Pancreas (tissue), 10 donors: ENCODE measurements at regions of chr3 and their contacts with region 1.

Region 1: DNA sequence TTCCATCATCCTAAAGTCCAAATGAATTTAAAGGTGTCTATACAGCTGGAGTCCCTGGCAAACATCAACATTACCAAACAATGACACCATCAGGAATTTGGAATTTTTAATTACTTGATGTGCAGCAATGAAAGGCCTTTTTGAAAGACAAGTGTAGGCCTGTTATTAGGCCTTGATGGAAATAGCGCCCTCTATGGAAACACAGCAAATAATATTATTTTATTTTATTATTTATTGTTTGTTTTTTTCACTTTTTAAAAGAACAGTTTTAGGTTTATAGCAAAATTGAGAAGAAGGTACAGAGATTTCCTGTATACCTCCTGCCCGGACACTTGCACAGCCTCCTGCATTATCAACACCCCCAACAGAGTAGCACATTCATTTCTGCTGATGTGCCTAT is 18.1 kb upstream of the OR5AC2 start:
- DNase-seq: no peak
- ATAC-seq: no peak
- H3K4me3 ChIP-seq: no peak overlapping the region
- H3K27ac ChIP-seq: no peak overlapping the region
- H3K4me1 ChIP-seq: no peaks in the 10 kb centered on the region
- H3K27me3 ChIP-seq: no peaks in the 10 kb centered on the region
- CTCF ChIP-seq: no peak

Region 2: GRCh38 chr3:97479740-97480139 is 589.1 kb before region 1 on chr3:
- intact Hi-C with region 1: loop called in 1 of 3 experiments (anchors 10 kb)
- DNase-seq: no peak
- ATAC-seq: no peak
- H3K4me3 ChIP-seq: no peak overlapping the region
- H3K27ac ChIP-seq: no peak overlapping the region
- H3K4me1 ChIP-seq: no peaks in the 10 kb centered on the region
- H3K27me3 ChIP-seq: no peaks in the 10 kb centered on the region
- CTCF ChIP-seq: no peak